ENCODE measurements at regions of chr3 and their contacts with region 1.

Region 1: DNA sequence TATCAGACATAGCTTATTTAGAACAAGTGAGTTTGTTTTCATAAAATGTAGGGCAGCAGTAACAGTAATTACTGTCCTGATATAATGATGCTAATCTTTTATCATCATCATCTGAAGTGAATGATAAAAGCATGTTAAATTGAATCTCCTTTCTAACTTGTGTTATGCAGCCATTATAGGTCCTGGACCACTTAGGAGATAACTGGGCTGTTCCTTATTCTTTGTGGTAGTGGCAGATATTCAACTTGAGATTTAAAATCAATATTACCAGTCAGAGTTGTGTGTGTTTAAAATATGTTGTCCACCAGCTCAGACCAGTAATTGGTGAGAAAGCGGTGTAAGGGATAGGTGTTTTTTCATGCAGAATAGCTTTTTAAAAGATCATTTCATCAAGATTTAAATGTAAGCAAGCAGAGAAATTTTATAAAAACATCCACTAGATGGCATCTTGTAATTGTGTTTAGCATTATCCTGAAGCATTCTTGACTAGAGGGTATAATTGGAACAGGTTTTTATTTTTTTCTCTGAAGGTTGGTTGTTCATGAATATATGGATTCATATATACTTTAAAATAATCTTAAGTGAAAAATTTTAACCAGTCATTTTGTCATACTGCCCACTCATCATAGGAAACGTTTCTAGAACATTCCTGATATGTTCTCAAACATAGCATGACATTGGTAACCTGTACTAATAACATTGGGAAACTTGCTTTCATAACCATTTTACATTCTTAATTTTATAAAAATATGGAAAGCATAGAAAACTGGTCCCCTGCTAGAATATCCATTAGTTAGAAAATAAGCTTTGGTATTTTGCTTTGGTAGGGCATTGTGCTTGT is 153.9 kb downstream of the BBX start:
- DNase-seq: no peak
- ATAC-seq: no peak
- H3K4me3 ChIP-seq: no peak overlapping the region
- H3K4me1 ChIP-seq: no peaks in the 10 kb centered on the region
- CTCF ChIP-seq: no peak

Region 2: DNA sequence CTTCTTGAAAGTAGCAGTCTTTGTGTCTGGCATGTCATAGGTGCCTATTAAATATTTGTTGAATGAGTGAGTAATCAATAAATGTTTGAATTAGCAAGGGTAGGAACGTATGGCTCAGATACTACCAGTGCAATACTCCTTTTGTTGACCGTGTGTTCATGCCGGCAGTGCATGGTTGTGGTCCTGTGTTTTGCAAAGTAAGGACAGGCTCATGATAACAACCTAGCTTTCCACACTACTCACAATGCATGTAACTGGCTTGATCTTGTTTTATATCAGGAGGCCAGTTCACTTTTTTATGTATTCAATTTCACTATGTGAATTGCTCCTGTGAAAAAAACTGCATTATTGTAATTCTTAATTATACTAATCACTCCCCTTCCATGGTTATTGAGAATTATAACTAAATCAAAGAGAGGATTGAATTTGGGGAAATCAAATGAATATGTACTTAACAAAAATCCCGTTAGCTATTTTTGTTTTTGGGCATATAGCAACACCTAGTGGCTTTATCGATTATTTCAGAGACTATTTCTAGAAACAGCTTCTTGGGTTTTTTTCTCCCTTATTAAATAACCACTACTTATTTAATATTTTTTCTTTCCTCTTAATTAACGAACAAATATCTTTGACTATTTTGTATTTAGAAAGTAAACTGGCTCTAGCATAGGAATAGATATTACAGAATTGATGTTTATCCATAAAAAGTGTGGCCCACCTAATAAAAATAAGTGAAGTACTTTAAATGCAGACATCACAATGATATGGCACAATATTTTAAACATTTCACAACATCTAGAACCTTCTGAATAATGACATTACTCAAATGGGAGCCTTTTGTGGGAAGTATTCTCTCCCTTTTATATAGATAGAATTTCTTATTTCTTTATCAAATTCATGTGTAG is 64.6 kb after region 1 on chr3:
- intact Hi-C with region 1: loop called in 1 of 2 experiments (anchors 5 kb)
- DNase-seq: no peak
- ATAC-seq: no peak
- H3K4me3 ChIP-seq: no peak overlapping the region
- H3K4me1 ChIP-seq: no peaks in the 10 kb centered on the region
- CTCF ChIP-seq: no peak

Measured in mucosa of descending colon (tissue), 3 donors.